T-cell (primary cell): ENCODE measurements at regions of chr4 and their contacts with region 1.

Region 1: DNA sequence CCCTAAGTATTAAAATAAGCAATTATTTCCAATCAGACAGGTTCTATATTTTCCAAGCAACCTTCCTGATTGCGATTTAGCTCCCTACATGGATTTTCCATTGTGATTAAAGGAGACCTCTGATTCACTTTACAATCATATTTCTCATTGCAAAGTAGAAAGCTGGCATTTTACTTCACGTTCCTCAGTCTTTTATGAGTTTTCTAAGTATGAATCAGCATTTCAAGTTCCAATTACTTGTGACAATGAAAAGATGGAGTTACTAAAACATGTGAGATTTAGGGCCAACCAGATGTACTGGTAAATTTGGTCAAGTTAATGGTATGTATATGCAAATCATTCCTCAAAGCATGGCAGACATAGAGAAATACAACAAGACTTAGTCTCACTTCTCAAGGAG is 206.2 kb downstream of the KCNIP4 start:
- DNase-seq: no peak
- ATAC-seq: no peak
- H3K4me3 ChIP-seq: no peak overlapping the region
- H3K4me3 Mint-ChIP-seq: no peak overlapping the region
- H3K27ac ChIP-seq: no peak overlapping the region
- H3K27ac Mint-ChIP-seq: no peak overlapping the region
- H3K4me1 ChIP-seq: no peaks in the 10 kb centered on the region
- H3K4me1 Mint-ChIP-seq: no peaks in the 10 kb centered on the region
- H3K27me3 ChIP-seq: no peaks in the 10 kb centered on the region
- H3K27me3 Mint-ChIP-seq: no peaks in the 10 kb centered on the region

Region 2: DNA sequence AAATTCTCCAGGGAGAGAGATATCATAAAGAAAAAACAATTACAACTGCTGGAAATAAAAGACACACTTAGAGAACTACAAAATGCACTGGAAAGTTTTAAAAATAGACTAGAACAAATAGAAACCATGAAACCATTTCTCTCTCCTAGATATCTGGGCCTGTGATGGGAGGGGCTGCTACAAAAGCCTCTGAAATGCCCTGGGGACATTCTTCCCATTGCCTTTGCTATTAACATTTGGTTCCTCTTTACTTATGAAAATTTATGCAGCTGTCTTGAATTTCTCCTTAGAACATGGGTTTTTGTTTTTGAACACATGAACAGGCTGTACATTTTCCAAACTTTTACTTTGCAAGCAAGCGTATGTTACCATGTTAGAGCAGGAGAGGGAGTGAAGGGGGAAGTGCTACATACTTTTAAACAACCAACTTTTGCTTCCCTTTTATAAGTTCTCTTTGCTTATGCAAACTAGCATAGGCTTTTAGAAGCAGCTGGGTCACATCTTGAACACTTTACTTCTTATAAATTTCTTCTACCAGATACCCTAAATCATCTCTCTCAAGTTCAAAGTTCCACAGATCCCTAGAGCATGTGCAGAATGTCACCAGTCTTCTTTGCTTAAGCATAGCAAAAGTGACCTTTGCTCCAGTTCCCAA is 1090.0 kb before region 1 on chr4:
- CTCF ChIA-PET with region 1: no interaction called
- POLR2A ChIA-PET with region 1: no interaction called
- DNase-seq: no peak
- ATAC-seq: no peak
- H3K4me3 ChIP-seq: no peak overlapping the region
- H3K4me3 Mint-ChIP-seq: no peak overlapping the region
- H3K27ac ChIP-seq: no peak overlapping the region
- H3K27ac Mint-ChIP-seq: no peak overlapping the region
- H3K4me1 ChIP-seq: no peaks in the 10 kb centered on the region
- H3K4me1 Mint-ChIP-seq: no peaks in the 10 kb centered on the region
- H3K27me3 ChIP-seq: peaks cover 0 to 15% of the 10 kb centered on the region in 2 experiments
- H3K27me3 Mint-ChIP-seq: peaks cover 8 to 27% of the 10 kb centered on the region in 2 donors

Region 3: DNA sequence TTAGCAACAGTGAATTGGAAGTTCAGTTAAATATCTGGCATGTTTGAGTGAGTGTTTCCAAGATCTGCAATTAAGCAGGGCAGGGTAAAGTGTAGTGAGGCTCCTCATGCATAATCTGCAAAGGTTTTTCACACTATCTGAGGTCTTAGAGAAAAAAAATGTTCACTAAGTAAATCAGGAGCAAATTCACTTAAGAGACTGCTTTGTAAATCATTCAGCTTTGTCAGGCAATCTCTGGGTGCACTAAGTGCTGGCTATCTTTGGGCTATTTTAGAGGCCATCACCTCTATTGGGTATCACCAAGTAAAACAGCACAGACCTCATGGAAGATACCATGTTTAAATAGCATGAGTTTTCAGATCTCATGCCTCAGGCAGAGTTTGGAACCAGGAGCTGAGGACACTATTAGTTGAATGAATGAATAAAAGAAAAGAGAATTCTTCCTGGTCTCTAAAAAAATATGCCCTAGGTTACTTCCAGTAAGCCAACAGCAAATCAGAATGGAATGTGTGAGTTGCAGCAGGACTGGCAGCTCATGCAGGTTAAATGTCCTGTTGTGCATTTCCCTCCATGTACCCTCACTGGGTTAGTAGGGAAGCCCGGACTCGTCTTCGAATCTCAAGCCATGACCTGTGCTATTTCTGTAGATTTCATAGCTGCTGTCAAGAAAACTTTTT is 10.9 kb after region 1 on chr4:
- CTCF ChIA-PET with region 1: interaction called in 1 of 2 experiments, 14 read pairs
- POLR2A ChIA-PET with region 1: interaction called in 1 of 2 experiments, 4 read pairs
- DNase-seq: no peak
- ATAC-seq: no peak
- H3K4me3 ChIP-seq: no peak overlapping the region
- H3K4me3 Mint-ChIP-seq: no peak overlapping the region
- H3K27ac ChIP-seq: no peak overlapping the region
- H3K27ac Mint-ChIP-seq: no peak overlapping the region
- H3K4me1 ChIP-seq: no peaks in the 10 kb centered on the region
- H3K4me1 Mint-ChIP-seq: no peaks in the 10 kb centered on the region
- H3K27me3 ChIP-seq: peaks cover 0 to 3% of the 10 kb centered on the region in 2 experiments
- H3K27me3 Mint-ChIP-seq: peaks cover 0 to 1% of the 10 kb centered on the region in 2 donors